Gastrocnemius medialis (tissue), 4 donors: ENCODE measurements at regions of chr6 and their contacts with region 1.

Region 1: GRCh38 chr6:19851241-19852089 is 14.3 kb downstream of the ID4 start:
- DNase-seq: no peak
- ATAC-seq: peak; percentile 87 to 89
- H3K4me3 ChIP-seq: no peak overlapping the region
- H3K27ac ChIP-seq: no peak overlapping the region
- H3K4me1 ChIP-seq: no peaks in the 10 kb centered on the region
- H3K27me3 ChIP-seq: no peaks in the 10 kb centered on the region
- CTCF ChIP-seq: peak; percentile 47 to 82 (median 70)
- POLR2A ChIP-seq: no peak

Region 2: GRCh38 chr6:18595774-18596530 is 1255.5 kb before region 1 on chr6:
- in situ Hi-C with region 1: no loop called
- intact Hi-C with region 1: loop called (anchors 5 kb)
- DNase-seq: peak; percentile 15 to 25
- ATAC-seq: peak; percentile 75 to 88
- H3K4me3 ChIP-seq: no peak overlapping the region
- H3K27ac ChIP-seq: no peak overlapping the region
- H3K4me1 ChIP-seq: no peaks in the 10 kb centered on the region
- H3K27me3 ChIP-seq: no peaks in the 10 kb centered on the region
- CTCF ChIP-seq: peak; percentile 65 to 88 (median 80)
- POLR2A ChIP-seq: no peak

Region 3: DNA sequence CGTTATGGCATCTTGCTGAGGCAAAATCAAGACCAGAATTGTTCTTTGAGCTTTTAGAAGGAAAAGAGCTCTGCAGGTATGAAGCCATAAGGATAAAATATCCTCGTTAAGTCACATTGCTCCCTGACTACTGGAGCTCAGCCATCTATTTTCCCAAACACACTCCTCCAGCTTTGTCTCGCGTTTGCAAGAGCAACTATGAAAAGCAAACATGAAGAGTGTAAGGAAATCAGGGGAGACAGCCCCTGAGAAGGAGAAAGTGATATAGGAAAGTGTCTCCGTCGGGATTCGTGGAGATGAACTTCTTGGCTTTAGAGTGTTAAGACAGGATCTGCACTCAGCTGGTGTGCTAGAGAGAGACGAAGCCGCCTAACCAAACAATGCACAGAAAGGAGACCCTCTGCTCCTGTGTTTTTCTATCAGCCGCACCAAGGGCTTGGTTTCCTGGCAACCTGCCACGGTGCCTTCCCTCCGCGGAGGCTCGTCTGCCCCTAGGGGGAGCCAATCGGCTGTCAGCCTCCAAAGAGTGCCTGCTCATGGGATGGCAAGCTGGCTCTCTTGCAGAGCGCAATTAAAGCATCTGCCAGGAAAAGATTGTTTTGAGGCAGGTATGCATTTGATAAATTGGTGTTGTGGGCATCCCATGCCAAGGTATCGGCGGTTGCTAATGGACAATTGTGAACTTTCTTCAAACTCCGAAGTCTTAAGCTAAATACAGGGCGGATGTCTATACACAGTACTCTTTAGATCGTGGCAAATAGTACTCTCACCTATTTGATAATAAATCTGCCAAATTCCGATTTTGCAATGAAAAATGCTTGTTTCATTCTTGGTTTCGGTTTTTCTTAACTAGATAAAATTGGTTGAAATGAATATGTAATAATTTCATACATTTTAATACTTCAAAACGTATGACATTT is 861.1 kb before region 1 on chr6:
- in situ Hi-C with region 1: loop called in 1 of 4 experiments (anchors 25 kb)
- intact Hi-C with region 1: no loop called
- DNase-seq: peak; percentile 3 to 16
- ATAC-seq: no peak
- H3K4me3 ChIP-seq: no peak overlapping the region
- H3K27ac ChIP-seq: no peak overlapping the region
- H3K4me1 ChIP-seq: peaks cover 0 to 4% of the 10 kb centered on the region in 2 donors
- H3K27me3 ChIP-seq: no peaks in the 10 kb centered on the region
- CTCF ChIP-seq: peak in 3 of 5 experiments; percentile 19 to 57 (median 47)
- POLR2A ChIP-seq: no peak

Region 4: GRCh38 chr6:19024737-19025136 is 826.7 kb before region 1 on chr6:
- in situ Hi-C with region 1: loop called in 1 of 4 experiments (anchors 25 kb)
- intact Hi-C with region 1: no loop called
- DNase-seq: no peak
- ATAC-seq: no peak
- H3K4me3 ChIP-seq: no peak overlapping the region
- H3K27ac ChIP-seq: no peak overlapping the region
- H3K4me1 ChIP-seq: no peaks in the 10 kb centered on the region
- H3K27me3 ChIP-seq: no peaks in the 10 kb centered on the region
- CTCF ChIP-seq: no peak
- POLR2A ChIP-seq: no peak

Region 5: DNA sequence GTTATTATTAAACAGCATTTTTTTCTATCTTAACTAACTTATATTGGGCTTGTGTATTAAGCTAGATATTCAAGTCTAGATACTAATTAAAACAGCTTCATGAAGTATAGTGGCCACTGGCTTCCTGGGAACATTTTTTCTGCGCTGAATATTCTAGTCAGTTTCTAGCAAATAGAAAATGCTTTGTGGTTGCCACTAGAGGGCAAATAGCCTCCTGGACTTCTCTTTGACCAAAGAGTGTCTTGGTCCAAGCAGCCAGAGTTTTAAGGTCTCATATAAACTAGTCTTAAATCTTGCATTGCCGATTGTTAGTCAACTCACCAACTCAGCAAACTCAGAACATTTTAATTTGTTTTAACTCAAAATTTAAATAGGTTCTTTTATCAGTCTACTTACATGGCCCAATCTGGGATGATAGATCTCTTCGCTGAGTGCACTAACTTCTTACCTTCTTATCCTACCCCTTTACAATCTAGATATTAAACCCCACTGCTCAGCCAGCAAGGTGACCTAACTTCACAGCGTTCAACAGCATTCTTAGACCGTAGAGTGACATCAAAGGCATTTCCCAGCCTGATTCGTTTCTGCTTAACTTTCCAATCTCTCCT is 38.8 kb before region 1 on chr6:
- in situ Hi-C with region 1: no loop called
- intact Hi-C with region 1: loop called (anchors 1 kb)
- DNase-seq: no peak
- ATAC-seq: peak in 1 of 2 donors; percentile 80
- H3K4me3 ChIP-seq: no peak overlapping the region
- H3K27ac ChIP-seq: no peak overlapping the region
- H3K4me1 ChIP-seq: no peaks in the 10 kb centered on the region
- H3K27me3 ChIP-seq: no peaks in the 10 kb centered on the region
- CTCF ChIP-seq: peak in 4 of 5 experiments; percentile 44 to 61 (median 54)
- POLR2A ChIP-seq: no peak

Region 6: GRCh38 chr6:19968201-19968600 is 116.7 kb after region 1 on chr6:
- in situ Hi-C with region 1: no loop called
- intact Hi-C with region 1: no loop called
- DNase-seq: no peak
- ATAC-seq: no peak
- H3K4me3 ChIP-seq: no peak overlapping the region
- H3K27ac ChIP-seq: no peak overlapping the region
- H3K4me1 ChIP-seq: no peaks in the 10 kb centered on the region
- H3K27me3 ChIP-seq: no peaks in the 10 kb centered on the region
- CTCF ChIP-seq: no peak
- POLR2A ChIP-seq: no peak